Testis (tissue), 5 donors: ENCODE measurements at regions of chr5 and their contacts with region 1.

Region 1: GRCh38 chr5:147822686-147823491 is 8.6 kb downstream of the SPINK1 start:
- DNase-seq: peak; percentile 76
- H3K4me3 ChIP-seq: no peak overlapping the region
- H3K27ac ChIP-seq: no peak overlapping the region
- H3K4me1 ChIP-seq: no peaks in the 10 kb centered on the region
- H3K27me3 ChIP-seq: no peaks in the 10 kb centered on the region
- CTCF ChIP-seq: peak; percentile 82 to 95 (median 88)
- POLR2A ChIP-seq: no peak

Region 2: DNA sequence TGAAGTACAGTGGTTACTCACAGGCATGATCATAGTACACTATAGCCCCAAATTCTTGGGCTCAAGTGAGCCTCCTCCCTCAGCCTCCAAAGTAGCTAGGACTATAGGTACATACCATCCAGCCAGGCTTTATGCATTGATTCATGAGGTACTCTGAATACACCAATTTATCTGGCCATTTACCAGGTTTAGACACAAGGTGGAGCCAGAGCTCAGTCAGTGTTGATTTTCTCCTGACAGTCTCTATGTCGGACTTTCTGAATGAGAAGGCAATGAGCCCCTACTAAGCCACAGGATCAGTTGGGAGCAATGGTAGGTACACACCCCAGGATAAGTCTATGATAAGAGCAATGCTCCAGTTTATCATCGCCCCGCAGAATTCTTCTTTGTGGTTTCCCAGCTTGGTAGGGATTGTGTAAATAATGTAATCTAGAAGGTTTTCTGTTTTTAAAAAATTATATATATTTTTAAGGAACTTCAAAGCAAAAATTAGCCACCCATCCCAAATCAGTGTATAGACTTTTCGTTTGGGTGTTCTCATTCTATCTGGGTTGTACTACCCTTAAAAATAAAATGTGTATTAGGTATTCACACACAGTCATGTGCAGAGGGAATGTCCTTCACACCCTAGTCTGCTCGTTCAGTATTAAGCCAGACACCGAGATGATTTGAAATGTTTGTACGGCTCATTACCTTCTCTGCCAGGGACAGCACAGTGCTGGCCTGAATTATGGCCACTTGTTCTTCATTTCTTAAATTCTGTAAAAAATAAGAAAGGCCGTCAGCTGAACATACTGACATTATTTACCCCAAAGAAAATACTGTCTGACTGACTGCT is 194.6 kb before region 1 on chr5:
- intact Hi-C with region 1: loop called (anchors 5 kb)
- DNase-seq: peak; percentile 78
- H3K4me3 ChIP-seq: no peak overlapping the region
- H3K27ac ChIP-seq: no peak overlapping the region
- H3K4me1 ChIP-seq: peaks cover 9% of the 10 kb centered on the region
- H3K27me3 ChIP-seq: no peaks in the 10 kb centered on the region
- CTCF ChIP-seq: peak; percentile 44 to 68 (median 63)
- POLR2A ChIP-seq: no peak

Region 3: GRCh38 chr5:147906332-147907095 is 83.6 kb after region 1 on chr5 and contains the start of gene C5orf46:
- intact Hi-C with region 1: no loop called
- DNase-seq: no peak
- H3K4me3 ChIP-seq: no peak within 1 kb of the TSS
- H3K27ac ChIP-seq: no peak within 1 kb of the TSS
- H3K4me1 ChIP-seq: no peaks in the 10 kb centered on the region
- H3K27me3 ChIP-seq: no peaks in the 10 kb centered on the region
- CTCF ChIP-seq: no peak
- POLR2A ChIP-seq: no peak
- total RNA-seq, gene C5orf46: 5.1 to 6.1 TPM

Region 4: DNA sequence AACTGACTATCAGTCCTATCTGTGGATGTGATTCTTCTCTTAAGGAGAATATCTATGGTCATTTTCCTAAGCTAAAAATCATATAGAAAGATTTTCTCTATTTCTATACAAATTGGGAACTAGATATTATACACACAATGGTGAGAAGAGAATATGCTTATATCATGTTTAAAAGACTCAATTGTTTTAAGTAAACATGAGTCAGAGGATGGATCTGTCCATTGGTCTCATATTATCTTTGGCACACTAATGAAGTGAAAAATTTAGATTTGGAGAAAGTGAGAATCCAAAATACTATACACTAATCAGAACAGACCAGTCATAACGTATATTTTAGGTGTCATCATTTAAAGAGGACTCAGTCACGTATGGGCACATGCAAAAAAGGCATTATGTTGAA is 329.0 kb after region 1 on chr5:
- intact Hi-C with region 1: no loop called
- DNase-seq: no peak
- H3K4me3 ChIP-seq: no peak overlapping the region
- H3K27ac ChIP-seq: no peak overlapping the region
- H3K4me1 ChIP-seq: no peaks in the 10 kb centered on the region
- H3K27me3 ChIP-seq: no peaks in the 10 kb centered on the region
- CTCF ChIP-seq: no peak
- POLR2A ChIP-seq: no peak